Calu3 (cell line): ENCODE measurements at regions of chr17 and their contacts with region 1.

Region 1: GRCh38 chr17:56819431-56820145 is 14.1 kb downstream of the C17orf67 start:
- DNase-seq: peak; percentile 74
- H3K4me3 Mint-ChIP-seq: no peak overlapping the region
- H3K27ac Mint-ChIP-seq: no peak overlapping the region
- H3K4me1 Mint-ChIP-seq: peaks cover 12% of the 10 kb centered on the region
- H3K27me3 Mint-ChIP-seq: no peaks in the 10 kb centered on the region
- CTCF ChIP-seq: peak; percentile 63

Region 2: DNA sequence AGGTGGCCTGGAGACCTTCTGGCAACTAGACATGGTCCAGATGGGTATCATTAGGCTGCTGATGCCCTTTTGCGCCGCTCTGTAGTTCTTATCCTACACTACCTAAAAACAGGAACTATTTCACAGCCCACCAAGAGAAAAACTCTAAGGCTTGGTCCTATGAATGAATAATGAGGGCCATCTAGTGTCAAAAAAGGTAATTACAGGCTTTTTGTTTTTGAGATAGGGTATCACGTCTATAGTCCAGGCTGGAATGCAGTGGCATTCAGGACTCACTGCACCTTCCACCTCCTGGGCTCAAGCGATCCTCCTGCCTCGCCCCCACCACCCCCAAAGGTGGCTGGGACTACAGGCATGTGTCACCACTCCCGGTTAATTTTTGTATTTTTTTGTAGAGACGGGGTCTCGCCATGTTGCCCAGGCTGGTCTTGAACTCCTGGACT is 120.3 kb after region 1 on chr17:
- CTCF ChIA-PET with region 1: interaction called, 6 read pairs
- intact Hi-C with region 1: loop called (anchors 1 kb)
- DNase-seq: no peak
- H3K4me3 Mint-ChIP-seq: no peak overlapping the region
- H3K27ac Mint-ChIP-seq: no peak overlapping the region
- H3K4me1 Mint-ChIP-seq: peaks cover 9% of the 10 kb centered on the region
- H3K27me3 Mint-ChIP-seq: no peaks in the 10 kb centered on the region
- CTCF ChIP-seq: peak; percentile 27